ENCODE measurements at regions of chr11 and their contacts with region 1.

Region 1: DNA sequence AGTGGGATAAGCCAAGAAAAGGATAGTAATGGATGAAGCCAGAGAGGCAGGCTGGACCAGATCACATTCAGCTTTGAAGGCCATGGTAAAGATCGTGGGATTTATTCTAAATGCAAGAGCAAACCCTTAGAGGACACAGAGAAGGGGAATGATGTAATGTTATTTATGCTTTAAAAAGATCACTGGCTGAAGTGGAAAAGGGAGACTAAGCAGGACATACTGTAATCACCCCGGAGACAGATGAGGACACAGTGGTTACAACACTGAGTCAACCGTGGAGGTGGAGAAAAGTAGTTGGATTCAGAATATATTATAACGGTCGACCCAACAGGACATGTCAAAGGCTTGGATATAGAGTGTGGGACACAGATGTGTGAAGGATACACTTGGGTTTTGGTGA is 38.5 kb downstream of the CDON start:
- DNase-seq: no peak
- ATAC-seq: peak; percentile 61 to 95 (median 78)
- H3K4me3 ChIP-seq: no peak overlapping the region
- H3K27ac ChIP-seq: peak overlapping the region in 5 of 10 donors; percentile 7 to 39 (median 34)
- H3K4me1 ChIP-seq: peaks cover 0 to 20% (median 4%) of the 10 kb centered on the region in 9 donors
- H3K27me3 ChIP-seq: no peaks in the 10 kb centered on the region
- CTCF ChIP-seq: no peak

Region 2: GRCh38 chr11:125950696-125951651 is 73.1 kb before region 1 on chr11:
- intact Hi-C with region 1: loop called in 1 of 10 experiments (anchors 10 kb)
- DNase-seq: peak; percentile 73 to 82
- ATAC-seq: peak; percentile 86 to 92 (median 88)
- H3K4me3 ChIP-seq: no peak overlapping the region
- H3K27ac ChIP-seq: peak overlapping the region in 8 of 10 donors; percentile 30 to 79 (median 62)
- H3K4me1 ChIP-seq: peaks cover 9 to 31% (median 22%) of the 10 kb centered on the region in 9 donors
- H3K27me3 ChIP-seq: peaks cover 0 to 6% (median 0%) of the 10 kb centered on the region in 7 donors
- CTCF ChIP-seq: no peak

Region 3: GRCh38 chr11:125968354-125968753 is 55.8 kb before region 1 on chr11:
- intact Hi-C with region 1: loop called in 1 of 10 experiments (anchors 10 kb)
- DNase-seq: no peak
- ATAC-seq: peak in 1 of 8 donors; percentile 29
- H3K4me3 ChIP-seq: no peak overlapping the region
- H3K27ac ChIP-seq: no peak overlapping the region
- H3K4me1 ChIP-seq: peaks cover 0 to 7% (median 0%) of the 10 kb centered on the region in 9 donors
- H3K27me3 ChIP-seq: no peaks in the 10 kb centered on the region
- CTCF ChIP-seq: no peak

Measured in heart right ventricle (tissue), 16 donors.